Transverse colon (tissue), 4 donors: ENCODE measurements at regions of chr15 and their contacts with region 1.

Region 1: GRCh38 chr15:91224755-91225380 is 124.8 kb downstream of the SV2B start:
- DNase-seq: no peak
- H3K4me3 ChIP-seq: no peak overlapping the region
- H3K27ac ChIP-seq: no peak overlapping the region
- H3K4me1 ChIP-seq: no peaks in the 10 kb centered on the region
- H3K27me3 ChIP-seq: peaks cover 7% of the 10 kb centered on the region
- CTCF ChIP-seq: peak; percentile 29 to 62 (median 54)
- EP300 ChIP-seq: no peak
- POLR2A ChIP-seq: no peak

Region 2: GRCh38 chr15:90982135-90982534 is 242.7 kb before region 1 on chr15:
- in situ Hi-C with region 1: no loop called
- intact Hi-C with region 1: no loop called
- DNase-seq: no peak
- H3K4me3 ChIP-seq: no peak overlapping the region
- H3K27ac ChIP-seq: no peak overlapping the region
- H3K4me1 ChIP-seq: no peaks in the 10 kb centered on the region
- H3K27me3 ChIP-seq: no peaks in the 10 kb centered on the region
- CTCF ChIP-seq: no peak
- EP300 ChIP-seq: no peak
- POLR2A ChIP-seq: no peak

Region 3: GRCh38 chr15:91049378-91050127 is 175.3 kb before region 1 on chr15:
- in situ Hi-C with region 1: loop called in 2 of 4 experiments (anchors 10 kb)
- intact Hi-C with region 1: no loop called
- DNase-seq: peak; percentile 70
- H3K4me3 ChIP-seq: no peak overlapping the region
- H3K27ac ChIP-seq: no peak overlapping the region
- H3K4me1 ChIP-seq: peaks cover 0 to 3% (median 0%) of the 10 kb centered on the region in 4 donors
- H3K27me3 ChIP-seq: peaks cover 24% of the 10 kb centered on the region
- CTCF ChIP-seq: peak; percentile 47 to 58 (median 53)
- EP300 ChIP-seq: no peak
- POLR2A ChIP-seq: no peak

Region 4: DNA sequence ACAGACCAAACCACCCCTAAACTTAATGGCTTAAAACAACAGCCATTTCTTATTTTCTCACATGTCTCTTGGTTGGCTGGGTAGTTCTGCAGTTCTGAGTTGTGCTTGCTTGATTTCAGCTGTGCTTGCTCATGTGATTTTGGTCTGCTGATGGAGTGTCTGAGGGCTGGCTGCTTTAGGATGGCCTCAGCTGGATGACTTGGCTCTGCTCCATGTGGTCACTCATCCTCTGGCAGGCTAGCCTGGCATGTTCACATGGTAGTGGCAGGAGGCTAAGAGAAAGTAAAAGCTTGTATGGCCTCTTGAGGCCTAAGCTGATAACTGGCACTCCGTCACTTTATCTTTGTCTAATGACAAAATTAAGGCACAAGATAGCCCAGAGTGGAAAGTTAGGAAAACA is 120.8 kb before region 1 on chr15:
- in situ Hi-C with region 1: no loop called
- intact Hi-C with region 1: no loop called
- DNase-seq: no peak
- H3K4me3 ChIP-seq: no peak overlapping the region
- H3K27ac ChIP-seq: no peak overlapping the region
- H3K4me1 ChIP-seq: peaks cover 7 to 18% (median 13%) of the 10 kb centered on the region in 4 donors
- H3K27me3 ChIP-seq: peaks cover 48% of the 10 kb centered on the region
- CTCF ChIP-seq: no peak
- EP300 ChIP-seq: no peak
- POLR2A ChIP-seq: no peak